H1 (cell line): ENCODE measurements at regions of chr5 and their contacts with region 1.

Region 1: GRCh38 chr5:177336112-177336511 is 15.4 kb downstream of the LMAN2 start:
- DNase-seq: no peak
- H3K4me3 ChIP-seq: no peak overlapping the region
- H3K27ac ChIP-seq: peak overlapping the region; percentile 64; the same call in 1 of the 2 replicates
- H3K4me1 ChIP-seq: peaks cover 0 to 5% (median 3%) of the 10 kb centered on the region in 4 experiments; a peak in 4 of 7 replicates
- H3K27me3 ChIP-seq: no peaks in the 10 kb centered on the region
- CTCF ChIP-seq: peak in 2 of 3 experiments; percentile 39 to 74; a peak in 3 of 4 replicates
- EP300 ChIP-seq: no peak
- POLR2A ChIP-seq: no peak
- RAD21 ChIP-seq: peak; percentile 13 to 27; a peak in 1 of 4 replicates

Region 2: GRCh38 chr5:177256296-177256695 is 79.8 kb before region 1 on chr5:
- CTCF ChIA-PET with region 1: no interaction called
- POLR2A ChIA-PET with region 1: no interaction called
- DNase-seq: no peak
- H3K4me3 ChIP-seq: no peak overlapping the region
- H3K27ac ChIP-seq: no peak overlapping the region
- H3K4me1 ChIP-seq: no peaks in the 10 kb centered on the region
- H3K27me3 ChIP-seq: no peaks in the 10 kb centered on the region
- CTCF ChIP-seq: no peak
- EP300 ChIP-seq: no peak
- POLR2A ChIP-seq: no peak
- RAD21 ChIP-seq: no peak

Region 3: DNA sequence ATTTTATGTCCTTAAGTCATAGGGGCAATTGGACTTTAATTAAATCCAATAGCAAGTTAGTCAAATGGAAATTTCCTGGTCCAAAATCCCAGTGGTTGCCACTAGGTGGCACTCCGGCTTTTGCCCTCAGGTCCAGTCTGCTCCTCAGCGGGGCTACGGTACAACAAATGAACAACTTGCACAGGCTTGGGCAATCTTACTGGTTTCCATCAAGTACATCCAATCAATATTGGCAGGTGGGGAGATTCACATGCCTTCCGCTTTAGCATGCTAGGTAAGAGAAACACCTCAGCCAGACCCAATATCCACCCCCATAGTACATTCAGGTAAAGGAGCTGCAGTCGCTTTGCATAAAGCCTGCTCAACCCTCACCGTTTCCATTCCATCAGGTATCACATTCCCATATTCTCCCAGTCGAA is 18.1 kb before region 1 on chr5:
- CTCF ChIA-PET with region 1: interaction called, 100 read pairs
- POLR2A ChIA-PET with region 1: interaction called, 7 read pairs
- DNase-seq: peak in 1 of 2 experiments; percentile 87
- H3K4me3 ChIP-seq: no peak overlapping the region
- H3K27ac ChIP-seq: no peak overlapping the region
- H3K4me1 ChIP-seq: peaks cover 0 to 4% (median 1%) of the 10 kb centered on the region in 4 experiments; a peak in 4 of 7 replicates
- H3K27me3 ChIP-seq: no peaks in the 10 kb centered on the region
- CTCF ChIP-seq: peak in 2 of 3 experiments; percentile 85 to 89; a peak in 3 of 4 replicates
- EP300 ChIP-seq: no peak
- POLR2A ChIP-seq: no peak
- RAD21 ChIP-seq: peak; percentile 87 to 90